B cell (primary cell): ENCODE measurements at regions of chr12 and their contacts with region 1.

Region 1: GRCh38 chr12:31804185-31804504 is 75.3 kb upstream of the AMN1 start:
- DNase-seq: no peak
- ATAC-seq: no peak
- H3K4me3 ChIP-seq: peak overlapping the region in 1 of 5 experiments; percentile 21
- H3K4me3 Mint-ChIP-seq: peak overlapping the region; percentile 85
- H3K27ac ChIP-seq: peak overlapping the region in 1 of 2 donors; percentile 54
- H3K27ac Mint-ChIP-seq: peak overlapping the region; percentile 90
- H3K4me1 ChIP-seq: peaks cover 21 to 43% of the 10 kb centered on the region in 2 donors
- H3K4me1 Mint-ChIP-seq: peaks cover 51% of the 10 kb centered on the region
- H3K27me3 ChIP-seq: no peaks in the 10 kb centered on the region
- H3K27me3 Mint-ChIP-seq: no peaks in the 10 kb centered on the region
- CTCF ChIP-seq: no peak

Region 2: GRCh38 chr12:31843398-31844095 is 39.4 kb after region 1 on chr12:
- CTCF ChIA-PET with region 1: no interaction called
- POLR2A ChIA-PET with region 1: no interaction called
- intact Hi-C with region 1: loop called (anchors 5 kb)
- DNase-seq: no peak
- ATAC-seq: no peak
- H3K4me3 ChIP-seq: no peak overlapping the region
- H3K4me3 Mint-ChIP-seq: peak overlapping the region; percentile 10
- H3K27ac ChIP-seq: no peak overlapping the region
- H3K27ac Mint-ChIP-seq: peak overlapping the region; percentile 75
- H3K4me1 ChIP-seq: peaks cover 0 to 5% of the 10 kb centered on the region in 2 donors
- H3K4me1 Mint-ChIP-seq: peaks cover 29% of the 10 kb centered on the region
- H3K27me3 ChIP-seq: no peaks in the 10 kb centered on the region
- H3K27me3 Mint-ChIP-seq: no peaks in the 10 kb centered on the region
- CTCF ChIP-seq: no peak